Testis (tissue), 5 donors: ENCODE measurements at regions of chr14 and their contacts with region 1.

Region 1: DNA sequence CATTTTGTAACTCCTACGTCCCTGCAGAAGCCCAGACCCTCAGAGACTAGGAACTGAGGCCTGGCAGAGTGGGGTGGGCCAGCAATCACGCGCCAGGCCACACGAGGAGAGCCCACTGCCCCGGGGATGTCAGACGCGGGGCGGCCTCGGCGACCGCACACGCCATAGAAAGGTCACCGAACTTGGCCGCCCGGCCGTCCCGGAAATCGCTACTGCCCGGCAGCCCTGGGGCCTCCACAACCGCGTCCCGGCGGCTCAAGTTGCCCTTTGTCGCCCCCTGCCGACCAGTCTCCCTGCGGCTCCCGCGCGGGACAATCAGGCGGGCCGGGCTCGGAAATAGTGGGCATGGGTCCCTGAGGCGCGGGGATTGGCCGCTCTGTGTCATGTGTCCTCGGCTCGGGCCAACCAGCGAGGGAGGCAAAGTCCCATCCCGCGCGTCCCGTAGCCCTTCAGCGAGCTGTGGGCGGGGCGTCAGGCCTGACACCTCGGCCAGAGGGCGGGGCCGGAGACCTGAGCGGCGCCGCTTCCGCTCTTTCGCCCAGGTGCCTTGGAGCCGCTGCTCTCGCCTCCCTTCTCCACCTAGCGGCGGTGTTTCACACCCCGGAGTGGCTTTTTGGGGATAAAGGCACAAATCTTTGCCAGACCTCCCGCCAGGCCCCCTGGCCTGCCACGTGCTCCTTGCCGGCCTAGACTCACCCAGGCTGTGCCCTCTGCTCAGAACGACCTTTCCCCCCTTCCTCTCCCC is 33.4 kb upstream of the DEGS2 start:
- DNase-seq: peak; percentile 100
- H3K4me3 ChIP-seq: peak overlapping the region; percentile 37 to 61
- H3K27ac ChIP-seq: peak overlapping the region; percentile 41 to 85
- H3K4me1 ChIP-seq: peaks cover 18% of the 10 kb centered on the region
- H3K27me3 ChIP-seq: no peaks in the 10 kb centered on the region
- CTCF ChIP-seq: peak; percentile 94 to 98 (median 95)
- POLR2A ChIP-seq: no peak

Region 2: DNA sequence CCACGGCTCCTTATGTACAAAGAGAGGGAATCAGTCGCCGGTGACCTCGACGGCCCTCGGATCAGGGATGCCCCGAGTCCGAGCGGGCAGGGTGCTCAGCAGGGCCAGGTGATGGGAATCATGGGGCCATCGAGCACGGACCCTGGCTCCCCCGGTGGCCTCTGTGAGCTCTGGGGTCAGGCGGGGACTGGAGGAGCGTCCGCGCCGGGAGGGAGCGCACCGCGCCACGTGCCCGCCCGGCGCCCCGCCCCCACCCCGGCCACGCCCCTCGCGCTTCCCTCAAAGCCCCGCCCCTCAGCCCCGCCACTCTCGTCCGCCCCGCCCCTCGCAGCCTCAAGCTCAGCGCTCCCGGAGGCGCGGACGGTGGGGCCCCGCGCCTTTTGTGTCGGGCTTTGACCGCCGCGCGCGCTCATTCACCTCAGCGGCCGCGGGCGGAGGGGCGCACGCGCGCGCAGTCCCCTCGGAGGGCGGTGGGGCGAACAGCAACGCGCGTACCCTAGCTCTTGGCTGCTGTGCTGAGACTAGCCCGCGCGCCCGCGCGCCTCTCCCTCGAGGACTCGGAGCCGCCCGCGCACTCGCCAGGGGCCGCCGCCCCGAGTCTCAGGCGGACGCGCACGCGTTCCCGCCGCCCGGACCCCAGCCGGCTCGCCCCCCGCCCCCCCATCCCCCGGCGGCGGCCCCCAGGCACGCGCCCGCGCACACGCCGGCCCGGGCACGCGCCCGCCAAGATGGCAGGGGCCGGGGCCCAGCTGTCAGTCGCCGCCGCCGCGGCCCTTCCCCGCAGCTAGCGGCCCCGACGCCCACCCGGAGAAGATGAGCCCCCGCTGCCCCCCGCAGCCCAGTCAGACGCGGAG is 221.5 kb before region 1 on chr14:
- intact Hi-C with region 1: loop called (anchors 5 kb)
- DNase-seq: peak; percentile 94
- H3K4me3 ChIP-seq: peak overlapping the region; percentile 71 to 77
- H3K27ac ChIP-seq: peak overlapping the region; percentile 80
- H3K4me1 ChIP-seq: peaks cover 34% of the 10 kb centered on the region
- H3K27me3 ChIP-seq: no peaks in the 10 kb centered on the region
- CTCF ChIP-seq: no peak
- POLR2A ChIP-seq: no peak

Region 3: GRCh38 chr14:100104523-100105300 is 88.1 kb before region 1 on chr14:
- intact Hi-C with region 1: no loop called
- DNase-seq: no peak
- H3K4me3 ChIP-seq: no peak overlapping the region
- H3K27ac ChIP-seq: peak overlapping the region in 1 of 2 donors; percentile 28
- H3K4me1 ChIP-seq: peaks cover 33% of the 10 kb centered on the region
- H3K27me3 ChIP-seq: no peaks in the 10 kb centered on the region
- CTCF ChIP-seq: no peak
- POLR2A ChIP-seq: no peak